Natural killer cell (primary cell): ENCODE measurements at regions of chr10 and their contacts with region 1.

Region 1: DNA sequence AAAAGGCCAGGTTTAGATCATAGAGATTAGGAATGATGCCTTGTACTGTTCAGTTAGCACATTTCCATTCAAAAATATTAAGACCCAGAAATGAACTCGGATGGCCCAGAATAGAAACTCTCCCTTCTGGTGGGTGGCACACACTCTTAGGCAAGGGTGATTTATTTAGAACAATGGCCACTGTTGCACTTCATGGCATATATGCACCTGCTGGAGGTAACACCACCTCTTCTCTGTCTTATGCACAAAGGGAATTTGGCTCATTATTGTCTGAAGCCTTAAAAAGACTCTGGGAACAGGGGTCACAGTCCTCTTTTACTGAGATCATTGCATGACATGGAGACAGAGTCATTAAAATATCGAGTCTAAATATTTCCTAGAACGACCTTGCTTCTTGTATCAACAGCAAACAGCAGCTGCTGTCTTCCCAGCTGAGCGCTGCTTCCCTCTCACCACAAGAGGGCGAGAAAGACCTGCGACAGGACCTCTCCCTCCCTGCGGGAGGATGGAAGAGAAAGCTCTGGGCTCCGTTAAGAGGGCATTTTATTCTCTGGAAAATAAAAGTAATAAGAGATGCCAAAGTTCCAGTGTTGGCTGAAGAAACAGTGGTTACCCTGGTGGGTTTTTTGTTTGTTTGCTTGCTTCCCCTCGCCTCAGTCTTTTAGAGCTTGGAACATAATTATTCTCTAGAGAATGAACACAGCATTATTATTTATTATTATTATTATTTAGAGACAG is 13.6 kb upstream of the BAMBI start:
- DNase-seq: peak; percentile 39 to 83
- ATAC-seq: peak; percentile 80 to 95 (median 94)
- H3K4me3 ChIP-seq: no peak overlapping the region
- H3K4me3 Mint-ChIP-seq: no peak overlapping the region
- H3K27ac ChIP-seq: no peak overlapping the region
- H3K27ac Mint-ChIP-seq: no peak overlapping the region
- H3K4me1 ChIP-seq: peaks cover 4% of the 10 kb centered on the region
- H3K4me1 Mint-ChIP-seq: peaks cover 0 to 12% of the 10 kb centered on the region in 2 donors
- H3K27me3 ChIP-seq: peaks cover 7% of the 10 kb centered on the region
- H3K27me3 Mint-ChIP-seq: peaks cover 37 to 44% of the 10 kb centered on the region in 2 donors
- CTCF ChIP-seq: peak; percentile 93

Region 2: DNA sequence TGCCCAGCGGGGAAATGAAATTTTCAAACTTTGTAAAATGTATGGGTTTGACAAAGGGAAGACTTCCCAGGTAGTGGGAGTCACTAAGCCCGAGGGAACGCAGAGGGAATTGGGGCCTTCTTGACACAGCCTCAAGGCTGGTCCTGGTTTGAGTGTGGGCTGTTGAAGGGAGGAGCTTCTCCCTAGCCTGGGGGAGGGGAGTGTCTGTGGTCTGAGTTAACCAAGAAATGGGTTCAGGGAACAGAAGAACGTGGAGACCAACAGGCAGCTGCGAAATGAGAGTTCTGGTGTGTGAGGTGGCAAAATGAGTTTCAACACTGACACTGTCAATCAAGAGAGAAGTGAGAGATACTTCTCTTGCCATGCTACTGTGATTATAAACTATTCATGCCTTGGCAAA is 19.1 kb before region 1 on chr10:
- intact Hi-C with region 1: no loop called
- DNase-seq: no peak
- ATAC-seq: no peak
- H3K4me3 ChIP-seq: no peak overlapping the region
- H3K4me3 Mint-ChIP-seq: no peak overlapping the region
- H3K27ac ChIP-seq: no peak overlapping the region
- H3K27ac Mint-ChIP-seq: no peak overlapping the region
- H3K4me1 ChIP-seq: no peaks in the 10 kb centered on the region
- H3K4me1 Mint-ChIP-seq: no peaks in the 10 kb centered on the region
- H3K27me3 ChIP-seq: no peaks in the 10 kb centered on the region
- H3K27me3 Mint-ChIP-seq: peaks cover 0 to 8% of the 10 kb centered on the region in 2 donors
- CTCF ChIP-seq: no peak

Region 3: DNA sequence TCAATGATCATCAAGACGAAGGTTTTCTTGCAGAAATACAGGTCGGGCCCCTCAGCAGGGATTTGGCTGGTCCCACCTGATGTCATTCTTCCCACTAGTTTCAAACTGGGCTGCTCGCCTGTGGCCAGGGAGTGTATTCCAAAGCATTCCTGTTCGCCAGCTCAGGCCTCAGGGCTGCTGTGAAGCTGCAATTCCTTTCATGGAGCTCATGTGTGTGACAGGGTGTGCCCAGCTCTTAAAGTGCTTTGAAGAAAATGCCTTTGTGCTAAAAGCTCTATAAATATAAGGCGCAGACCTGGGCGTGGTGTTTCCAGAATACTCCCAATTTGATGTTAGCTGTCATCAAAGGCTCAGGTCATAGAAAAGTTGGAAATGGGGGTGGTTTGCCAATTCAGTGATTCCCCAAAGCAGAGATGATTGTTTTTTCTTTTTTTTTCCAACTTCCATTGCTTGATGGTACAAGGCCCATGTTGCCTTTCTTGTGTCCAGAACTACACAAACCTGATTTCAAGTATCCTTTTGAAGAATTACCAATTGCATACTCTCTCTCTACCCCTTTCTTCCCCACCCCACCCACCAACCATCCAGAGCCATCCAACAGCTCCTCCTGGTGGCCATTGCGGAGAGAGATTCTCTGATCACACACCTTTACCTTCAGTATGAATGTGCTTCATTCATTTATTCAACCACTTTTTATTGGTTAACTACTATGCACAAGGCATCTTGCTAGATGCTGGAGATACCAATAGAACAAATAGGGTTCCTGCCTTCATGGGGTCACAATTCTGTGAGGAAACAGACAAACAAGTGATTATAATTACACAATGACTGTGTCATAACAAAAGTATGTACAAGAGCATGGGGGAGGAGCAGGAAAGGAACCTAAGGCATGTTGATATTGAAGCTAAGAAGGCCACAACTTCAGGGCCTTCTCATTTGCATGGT is 327.9 kb after region 1 on chr10:
- intact Hi-C with region 1: loop called (anchors 2 kb)
- DNase-seq: peak in 1 of 2 donors; percentile 53
- ATAC-seq: no peak
- H3K4me3 ChIP-seq: no peak overlapping the region
- H3K4me3 Mint-ChIP-seq: no peak overlapping the region
- H3K27ac ChIP-seq: no peak overlapping the region
- H3K27ac Mint-ChIP-seq: no peak overlapping the region
- H3K4me1 ChIP-seq: no peaks in the 10 kb centered on the region
- H3K4me1 Mint-ChIP-seq: no peaks in the 10 kb centered on the region
- H3K27me3 ChIP-seq: no peaks in the 10 kb centered on the region
- H3K27me3 Mint-ChIP-seq: no peaks in the 10 kb centered on the region
- CTCF ChIP-seq: peak; percentile 10